CD4-positive, alpha-beta T cell (primary cell): ENCODE measurements at regions of chr3 and their contacts with region 1.

Region 1: GRCh38 chr3:141237701-141238521 is 6.3 kb downstream of the PXYLP1 start:
- DNase-seq: peak in 3 of 14 experiments; percentile 21 to 31 (median 28)
- ATAC-seq: peak; percentile 36
- H3K4me3 ChIP-seq: no peak overlapping the region
- H3K4me3 Mint-ChIP-seq: peak overlapping the region; percentile 69
- H3K27ac ChIP-seq: peak overlapping the region; percentile 37 to 39
- H3K27ac Mint-ChIP-seq: peak overlapping the region; percentile 91
- H3K4me1 ChIP-seq: peaks cover 67% of the 10 kb centered on the region
- H3K4me1 Mint-ChIP-seq: peaks cover 97% of the 10 kb centered on the region
- H3K27me3 ChIP-seq: no peaks in the 10 kb centered on the region
- H3K27me3 Mint-ChIP-seq: no peaks in the 10 kb centered on the region
- CTCF ChIP-seq: no peak

Region 2: GRCh38 chr3:141255846-141256261 is 17.9 kb after region 1 on chr3:
- CTCF ChIA-PET with region 1: interaction called, 44 read pairs
- POLR2A ChIA-PET with region 1: interaction called, 320 read pairs
- intact Hi-C with region 1: loop called (anchors 1 to 2 kb)
- DNase-seq: peak in 9 of 14 experiments; percentile 15 to 83 (median 52)
- ATAC-seq: peak; percentile 97
- H3K4me3 ChIP-seq: no peak overlapping the region
- H3K4me3 Mint-ChIP-seq: no peak overlapping the region
- H3K27ac ChIP-seq: no peak overlapping the region
- H3K27ac Mint-ChIP-seq: peak overlapping the region; percentile 69
- H3K4me1 ChIP-seq: peaks cover 15% of the 10 kb centered on the region
- H3K4me1 Mint-ChIP-seq: peaks cover 56% of the 10 kb centered on the region
- H3K27me3 ChIP-seq: no peaks in the 10 kb centered on the region
- H3K27me3 Mint-ChIP-seq: no peaks in the 10 kb centered on the region
- CTCF ChIP-seq: peak; percentile 64